ENCODE measurements at regions of chr15 and their contacts with region 1.

Region 1: DNA sequence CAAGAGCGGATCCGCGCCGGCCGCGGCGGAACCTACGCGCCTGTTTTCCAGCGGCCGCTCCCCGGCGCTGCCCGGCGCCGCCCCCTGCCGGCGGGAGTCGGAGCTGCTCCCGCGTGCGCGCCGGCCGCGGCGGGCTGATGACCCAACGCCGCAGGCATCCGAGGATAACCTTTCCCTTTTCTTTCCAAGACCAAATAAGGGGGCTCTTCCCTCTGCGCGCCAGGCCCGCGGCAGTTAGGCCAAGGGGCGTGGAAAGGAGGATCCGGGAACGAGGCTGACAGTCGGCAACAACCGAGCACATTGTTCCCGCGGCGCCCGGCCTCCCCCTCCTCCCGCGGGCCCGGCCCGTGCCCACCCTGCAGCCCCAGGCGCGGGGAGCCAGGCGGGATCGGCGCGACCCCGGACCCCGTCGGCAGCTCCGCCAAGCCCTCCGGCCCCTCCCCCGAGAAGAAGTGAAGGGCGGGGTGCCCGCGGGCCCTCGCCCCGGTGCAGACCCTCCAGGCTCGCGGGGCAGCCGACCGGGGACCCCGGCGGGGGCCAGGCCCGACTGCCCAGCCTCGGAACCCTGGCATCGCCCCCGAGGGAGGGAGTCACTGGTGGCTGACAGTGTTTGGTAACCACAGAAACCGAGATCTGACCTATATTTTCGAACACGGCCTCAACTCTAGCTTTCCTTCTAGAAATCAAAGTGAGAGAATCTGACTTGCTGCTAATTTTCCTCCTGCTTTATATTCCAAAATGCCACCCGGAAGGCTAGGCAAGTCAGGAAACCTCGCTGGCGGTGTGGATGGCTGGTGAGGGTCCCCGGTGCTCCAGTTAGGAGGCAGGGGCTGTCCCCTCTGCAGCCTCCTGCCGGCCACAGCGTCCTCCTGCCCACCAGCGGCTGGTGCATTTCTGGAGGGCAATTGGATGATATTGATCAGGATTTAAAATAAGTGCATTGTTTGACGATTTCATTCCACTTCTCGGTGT is 45.6 kb upstream of the SYNM start:
- DNase-seq: peak in 9 of 10 donors; percentile 16 to 81 (median 43)
- H3K4me3 ChIP-seq: peak overlapping the region; percentile 57 to 82 (median 69)
- H3K27ac ChIP-seq: peak overlapping the region in 58 of 59 donors; percentile 22 to 95 (median 84)
- H3K27me3 ChIP-seq: no peaks in the 10 kb centered on the region
- CTCF ChIP-seq: peak in 55 of 56 donors; percentile 42 to 87 (median 74)

Region 2: DNA sequence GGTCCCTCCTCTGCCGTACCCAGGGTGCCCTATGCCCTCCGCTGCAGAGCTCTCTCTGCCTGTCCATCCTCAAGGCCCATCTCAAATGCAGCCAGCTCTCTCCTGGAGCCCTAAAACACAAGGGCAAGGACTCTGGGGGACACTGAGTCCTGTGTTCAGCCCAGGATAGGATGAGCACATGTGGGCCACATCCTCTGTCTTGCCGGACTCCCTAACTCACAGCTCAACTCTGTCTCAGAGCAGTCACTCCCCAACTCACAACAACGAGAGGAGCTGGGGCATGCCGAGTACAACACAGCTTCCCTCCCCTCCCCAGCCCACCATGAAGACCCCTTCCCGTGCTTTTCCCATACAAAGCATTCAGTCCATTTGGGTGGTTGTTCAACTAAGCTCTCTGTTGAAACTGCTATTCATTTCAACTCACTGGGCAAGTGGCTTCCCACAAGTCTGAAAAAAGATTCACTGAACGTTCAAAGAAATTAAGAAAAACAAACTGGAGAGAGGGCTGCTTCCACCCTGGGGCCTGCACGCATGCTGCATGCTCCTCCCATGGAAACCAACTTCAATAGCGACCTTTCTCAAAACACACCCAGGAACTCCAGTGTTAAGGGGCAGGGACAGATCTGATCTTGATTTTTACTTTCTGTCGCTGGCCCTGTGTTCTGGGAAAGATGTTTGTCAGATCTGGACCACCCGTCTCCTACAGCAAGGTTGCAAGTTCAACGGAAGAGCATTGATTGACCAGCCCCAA is 535.2 kb before region 1 on chr15:
- intact Hi-C with region 1: loop called in 1 of 2 experiments (anchors 5 kb)
- DNase-seq: no peak
- H3K4me3 ChIP-seq: no peak overlapping the region
- H3K27ac ChIP-seq: peak overlapping the region in 1 of 59 donors; percentile 46
- H3K27me3 ChIP-seq: peaks cover 0 to 8% (median 0%) of the 10 kb centered on the region in 45 donors
- CTCF ChIP-seq: no peak

Region 3: GRCh38 chr15:98647774-98648653 is 411.3 kb before region 1 on chr15 and contains the start of gene IGF1R:
- intact Hi-C with region 1: loop called in 1 of 2 experiments (anchors 10 kb)
- DNase-seq: peak; percentile 70 to 89 (median 78)
- H3K4me3 ChIP-seq: peak within 1 kb of the TSS; percentile 73 to 98 (median 85)
- H3K27ac ChIP-seq: peak within 1 kb of the TSS; percentile 81 to 99 (median 94)
- H3K27me3 ChIP-seq: no peaks in the 10 kb centered on the region
- CTCF ChIP-seq: peak in 17 of 56 donors; percentile 4 to 47 (median 13)
- total RNA-seq, gene IGF1R: 53.3 to 130 (median 84.4) TPM

Region 4: DNA sequence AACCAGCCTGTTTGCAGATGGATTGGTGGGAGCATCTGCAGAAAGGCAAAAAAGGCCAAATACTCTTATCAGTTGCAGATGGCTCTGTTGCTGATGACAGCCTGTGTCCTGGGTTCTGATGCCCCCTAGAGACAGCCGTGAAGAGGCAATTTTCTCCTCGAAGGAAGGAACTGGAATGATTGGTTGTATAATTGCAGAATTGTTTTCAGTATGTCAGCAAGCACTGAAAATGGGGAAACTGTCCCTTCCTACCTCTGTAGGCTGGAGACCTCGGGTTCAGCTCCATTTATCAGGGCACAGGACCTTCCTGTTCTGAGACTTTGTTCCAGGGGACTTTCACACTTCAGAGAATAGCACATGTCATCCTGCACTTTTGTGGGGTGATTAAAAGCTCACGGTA is 154.8 kb before region 1 on chr15:
- intact Hi-C with region 1: loop called in 1 of 2 experiments (anchors 2 kb)
- DNase-seq: peak in 7 of 10 donors; percentile 31 to 64 (median 55)
- H3K4me3 ChIP-seq: no peak overlapping the region
- H3K27ac ChIP-seq: peak overlapping the region in 53 of 59 donors; percentile 9 to 91 (median 60)
- H3K27me3 ChIP-seq: no peaks in the 10 kb centered on the region
- CTCF ChIP-seq: peak; percentile 20 to 82 (median 69)

Region 5: DNA sequence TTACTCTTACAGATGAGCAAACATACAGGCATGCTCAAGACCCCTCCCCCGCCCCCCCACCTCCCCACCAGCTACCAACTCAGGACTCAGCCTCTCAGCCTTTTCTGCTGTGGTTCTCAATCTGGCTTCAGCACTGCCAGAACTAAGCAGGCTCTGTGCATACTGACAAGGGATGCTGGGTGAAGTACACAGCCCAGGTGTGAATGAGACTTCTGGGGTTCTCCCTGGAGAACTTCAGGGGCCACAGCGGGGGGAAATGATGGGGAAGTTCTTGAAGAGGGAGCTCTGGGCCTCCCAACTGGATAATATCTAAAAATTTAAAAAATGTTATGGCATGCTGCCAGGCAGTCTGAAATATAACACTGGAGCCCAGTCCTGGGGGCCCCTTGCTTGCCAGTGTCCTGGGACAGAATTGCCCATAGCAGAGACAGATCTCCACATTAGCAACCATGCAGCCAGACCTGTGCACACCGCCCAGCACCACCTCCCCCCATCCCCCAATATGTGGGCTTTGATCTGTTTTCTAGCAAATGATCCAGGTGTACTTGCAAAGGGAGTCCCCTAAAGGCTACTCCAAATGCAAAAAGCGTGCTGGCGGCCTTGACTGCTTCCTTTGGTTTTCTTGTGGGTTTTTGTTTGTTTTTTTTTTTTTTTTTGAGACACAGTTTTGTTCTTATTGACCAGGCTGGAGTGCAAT is 93.1 kb before region 1 on chr15:
- intact Hi-C with region 1: loop called (anchors 5 to 10 kb)
- DNase-seq: no peak
- H3K4me3 ChIP-seq: no peak overlapping the region
- H3K27ac ChIP-seq: no peak overlapping the region
- H3K27me3 ChIP-seq: no peaks in the 10 kb centered on the region
- CTCF ChIP-seq: no peak